Gastrocnemius medialis (tissue), 4 donors: ENCODE measurements at regions of chr7 and their contacts with region 1.

Region 1: GRCh38 chr7:33554046-33554445 is 351.3 kb upstream of the BMPER start:
- DNase-seq: no peak
- ATAC-seq: no peak
- H3K4me3 ChIP-seq: no peak overlapping the region
- H3K27ac ChIP-seq: peak overlapping the region in 1 of 4 donors; percentile 14
- H3K4me1 ChIP-seq: peaks cover 40 to 52% of the 10 kb centered on the region in 2 donors
- H3K27me3 ChIP-seq: no peaks in the 10 kb centered on the region
- CTCF ChIP-seq: no peak
- POLR2A ChIP-seq: no peak

Region 2: GRCh38 chr7:33334349-33334748 is 219.7 kb before region 1 on chr7:
- in situ Hi-C with region 1: no loop called
- intact Hi-C with region 1: no loop called
- DNase-seq: no peak
- ATAC-seq: no peak
- H3K4me3 ChIP-seq: no peak overlapping the region
- H3K27ac ChIP-seq: no peak overlapping the region
- H3K4me1 ChIP-seq: no peaks in the 10 kb centered on the region
- H3K27me3 ChIP-seq: no peaks in the 10 kb centered on the region
- CTCF ChIP-seq: peak in 2 of 5 experiments; percentile 9 to 18
- POLR2A ChIP-seq: no peak

Region 3: DNA sequence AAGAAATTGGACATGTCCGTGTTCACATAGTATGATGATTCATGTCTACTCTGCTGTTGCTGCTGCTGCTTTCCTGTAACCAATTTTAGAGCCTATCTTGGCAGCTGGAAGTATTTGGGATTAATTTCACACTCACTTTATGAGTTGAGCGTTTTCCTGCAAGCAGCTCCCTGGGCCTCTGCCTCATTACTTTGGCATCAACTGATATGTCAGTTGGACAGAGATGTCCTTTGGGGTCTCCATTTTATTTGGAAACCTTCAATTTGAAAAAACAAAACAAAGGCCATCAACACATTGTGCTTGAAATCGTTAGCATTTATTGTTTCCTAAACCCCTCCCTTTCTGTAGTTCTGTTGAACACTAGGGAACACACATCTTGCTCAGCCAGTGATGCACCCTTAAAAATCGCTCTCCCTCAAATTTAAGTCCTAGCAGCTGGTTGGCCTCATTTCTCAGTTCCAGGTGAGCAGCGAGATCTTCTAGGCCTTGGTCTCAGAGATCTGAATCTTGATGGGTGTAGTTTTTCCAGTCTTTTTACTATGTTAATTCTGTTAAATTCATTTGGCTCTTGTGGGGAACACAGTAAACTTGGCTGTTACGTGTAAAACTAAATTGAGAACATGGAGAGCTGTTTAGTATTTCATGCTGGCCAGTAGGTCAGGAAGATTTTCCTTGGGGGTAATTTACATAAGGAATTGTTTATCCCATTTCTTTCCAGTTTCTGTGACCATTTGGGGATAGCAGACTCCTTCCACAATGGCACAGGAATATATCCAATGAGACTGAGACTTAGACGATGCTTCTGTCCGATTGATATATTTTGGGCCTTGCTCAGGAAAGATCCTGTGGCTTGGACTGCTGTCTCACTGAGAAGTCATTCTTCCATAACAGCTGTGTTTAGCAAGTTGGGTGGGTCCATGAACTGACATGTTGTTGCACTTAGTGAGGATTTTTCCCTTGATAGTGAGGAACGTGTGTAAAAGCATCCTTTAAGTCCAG is 53.0 kb before region 1 on chr7:
- in situ Hi-C with region 1: no loop called
- intact Hi-C with region 1: loop called (anchors 5 kb)
- DNase-seq: no peak
- ATAC-seq: peak; percentile 75 to 90
- H3K4me3 ChIP-seq: no peak overlapping the region
- H3K27ac ChIP-seq: peak overlapping the region; percentile 26 to 69 (median 57)
- H3K4me1 ChIP-seq: peaks cover 31 to 40% of the 10 kb centered on the region in 2 donors
- H3K27me3 ChIP-seq: no peaks in the 10 kb centered on the region
- CTCF ChIP-seq: no peak
- POLR2A ChIP-seq: no peak

Region 4: GRCh38 chr7:33591490-33592065 is 37.5 kb after region 1 on chr7:
- in situ Hi-C with region 1: no loop called
- intact Hi-C with region 1: no loop called
- DNase-seq: no peak
- ATAC-seq: no peak
- H3K4me3 ChIP-seq: no peak overlapping the region
- H3K27ac ChIP-seq: no peak overlapping the region
- H3K4me1 ChIP-seq: peaks cover 0 to 12% of the 10 kb centered on the region in 2 donors
- H3K27me3 ChIP-seq: no peaks in the 10 kb centered on the region
- CTCF ChIP-seq: no peak
- POLR2A ChIP-seq: no peak